Ovary (tissue), 10 donors: ENCODE measurements at regions of chr9 and their contacts with region 1.

Region 1: GRCh38 chr9:133726401-133727276 is 11.5 kb downstream of the SARDH start:
- DNase-seq: peak in 4 of 5 donors; percentile 50 to 67 (median 62)
- H3K4me3 ChIP-seq: no peak overlapping the region
- H3K27ac ChIP-seq: no peak overlapping the region
- H3K4me1 ChIP-seq: no peaks in the 10 kb centered on the region
- H3K27me3 ChIP-seq: no peaks in the 10 kb centered on the region
- CTCF ChIP-seq: peak in 2 of 3 donors; percentile 9 to 28
- EP300 ChIP-seq: no peak
- POLR2A ChIP-seq: no peak

Region 2: DNA sequence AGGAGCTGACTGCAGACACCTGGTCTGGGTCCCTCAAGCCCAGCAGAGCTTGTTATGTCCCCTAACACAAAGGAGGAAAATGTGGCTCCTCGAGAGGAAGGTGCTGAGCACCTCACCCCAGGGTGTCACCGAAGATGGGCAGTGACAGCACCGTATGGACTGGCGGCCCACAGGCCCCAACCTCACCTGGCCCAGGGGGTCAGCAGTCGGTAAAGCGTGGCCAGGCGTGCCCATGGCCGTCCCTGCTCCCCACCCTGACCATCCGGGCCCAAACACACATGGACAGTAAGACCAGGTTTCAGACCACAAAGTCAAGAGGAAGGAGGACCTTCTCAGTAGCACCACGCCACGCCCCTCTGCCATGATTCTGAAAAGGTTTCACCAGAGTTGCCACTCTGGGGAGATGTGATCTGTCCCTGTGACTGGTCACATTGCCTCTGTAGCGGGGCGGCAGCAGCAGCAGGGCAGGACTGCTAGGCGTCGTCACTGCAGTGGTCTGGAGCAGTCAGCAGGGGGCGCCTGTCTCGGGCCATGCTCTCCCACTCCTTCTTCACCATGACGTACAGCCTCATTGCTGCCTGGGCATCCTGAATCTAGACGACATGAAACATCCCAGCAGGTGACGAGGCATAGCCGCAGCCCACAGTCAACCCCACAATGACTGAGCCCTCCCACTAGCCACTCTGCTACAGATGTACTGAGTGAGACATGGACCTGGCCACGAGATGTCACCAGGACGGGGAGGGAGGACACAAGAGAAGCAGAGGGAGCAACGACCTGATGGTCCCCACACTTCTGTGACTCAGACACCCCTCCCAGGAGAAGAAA is 319.9 kb before region 1 on chr9:
- intact Hi-C with region 1: loop called in 1 of 4 experiments (anchors 10 kb)
- DNase-seq: peak; percentile 53 to 79 (median 72)
- H3K4me3 ChIP-seq: no peak overlapping the region
- H3K27ac ChIP-seq: no peak overlapping the region
- H3K4me1 ChIP-seq: no peaks in the 10 kb centered on the region
- H3K27me3 ChIP-seq: no peaks in the 10 kb centered on the region
- CTCF ChIP-seq: peak; percentile 61 to 78 (median 73)
- EP300 ChIP-seq: no peak
- POLR2A ChIP-seq: no peak

Region 3: DNA sequence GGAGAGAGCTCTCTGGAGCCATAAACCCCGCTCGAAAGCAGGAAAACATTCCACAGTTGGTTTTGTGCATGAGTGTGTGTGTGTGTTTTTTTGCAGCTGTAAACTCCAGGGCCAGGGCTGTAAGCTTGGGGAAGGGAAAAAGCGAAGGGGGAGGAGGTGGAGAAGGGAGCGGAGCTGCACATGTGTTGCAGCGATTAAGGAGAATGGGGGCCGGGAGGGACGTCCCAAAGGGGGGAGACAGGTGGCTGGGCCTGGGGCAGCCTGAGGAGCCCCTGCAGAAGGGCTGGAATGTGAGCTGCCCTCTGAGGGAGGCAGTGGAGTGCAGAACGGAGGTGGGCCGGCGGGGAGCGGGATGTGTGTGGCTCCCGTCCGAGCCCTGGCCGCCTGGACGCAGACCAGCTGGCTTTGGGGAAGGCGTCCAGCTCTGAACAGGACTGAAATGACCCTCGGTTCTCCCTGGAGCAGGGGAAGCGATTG is 199.2 kb before region 1 on chr9:
- intact Hi-C with region 1: loop called in 2 of 4 experiments (anchors 5 to 10 kb)
- DNase-seq: peak; percentile 73 to 89 (median 86)
- H3K4me3 ChIP-seq: no peak overlapping the region
- H3K27ac ChIP-seq: peak overlapping the region in 1 of 2 donors; percentile 49
- H3K4me1 ChIP-seq: peaks cover 17% of the 10 kb centered on the region
- H3K27me3 ChIP-seq: no peaks in the 10 kb centered on the region
- CTCF ChIP-seq: no peak
- EP300 ChIP-seq: no peak
- POLR2A ChIP-seq: no peak

Region 4: DNA sequence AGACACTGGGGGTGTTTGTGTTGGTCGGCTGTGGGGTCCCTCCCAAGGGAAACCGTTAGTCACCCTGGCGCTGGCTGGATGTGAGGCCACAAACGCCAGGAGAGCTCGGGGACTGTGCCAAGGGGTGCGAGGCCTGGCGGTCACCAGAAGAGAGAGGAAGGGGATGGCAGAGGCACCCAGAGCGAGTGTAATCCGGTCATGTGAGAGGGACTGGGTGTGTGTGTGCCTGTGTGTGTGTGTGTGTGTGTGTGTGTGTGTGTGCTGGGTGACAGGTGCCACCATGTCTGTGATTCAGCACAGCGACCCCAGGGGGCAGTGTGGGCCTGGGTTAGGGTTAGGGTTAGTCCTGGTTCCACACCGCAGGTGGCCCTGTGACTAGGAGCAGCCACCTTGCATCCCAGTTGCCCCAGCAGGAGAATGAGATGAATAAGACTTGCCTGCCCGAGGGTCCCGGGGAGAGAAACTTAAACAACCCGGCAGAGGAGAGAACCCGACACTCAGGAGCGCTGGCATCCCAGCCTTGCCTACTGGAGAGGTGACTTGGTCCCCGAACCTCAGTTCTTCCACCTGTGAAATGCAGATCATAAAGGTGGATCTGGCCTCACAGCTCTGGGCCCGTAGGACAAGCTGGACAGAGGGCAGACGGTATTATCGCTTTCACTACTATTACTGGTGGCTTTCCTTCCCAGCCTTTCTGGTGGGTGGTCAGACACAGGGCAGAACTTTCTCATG is 193.5 kb before region 1 on chr9:
- intact Hi-C with region 1: loop called in 2 of 4 experiments (anchors 5 to 10 kb)
- DNase-seq: peak in 1 of 5 donors; percentile 72
- H3K4me3 ChIP-seq: no peak overlapping the region
- H3K27ac ChIP-seq: no peak overlapping the region
- H3K4me1 ChIP-seq: peaks cover 18% of the 10 kb centered on the region
- H3K27me3 ChIP-seq: no peaks in the 10 kb centered on the region
- CTCF ChIP-seq: no peak
- EP300 ChIP-seq: no peak
- POLR2A ChIP-seq: no peak

Region 5: DNA sequence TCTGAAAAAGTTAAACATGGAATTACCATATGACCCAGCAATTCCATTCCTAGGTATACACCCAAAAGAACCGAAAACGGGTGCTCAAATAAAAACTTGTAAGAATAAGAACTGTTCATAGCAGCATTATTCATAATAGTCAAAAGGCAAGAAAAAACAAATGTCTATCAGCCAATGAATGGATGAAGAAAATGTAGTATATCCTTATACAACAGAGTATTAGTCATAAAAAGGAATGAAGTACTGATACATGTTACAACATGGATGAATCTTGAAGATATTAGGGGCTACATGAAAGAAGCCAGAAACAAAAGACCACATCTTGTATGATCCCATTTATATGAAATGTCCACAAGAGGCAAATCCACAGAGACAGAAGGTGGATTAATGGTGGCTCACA is 356.8 kb after region 1 on chr9:
- intact Hi-C with region 1: no loop called
- DNase-seq: no peak
- H3K4me3 ChIP-seq: no peak overlapping the region
- H3K27ac ChIP-seq: no peak overlapping the region
- H3K4me1 ChIP-seq: no peaks in the 10 kb centered on the region
- H3K27me3 ChIP-seq: no peaks in the 10 kb centered on the region
- CTCF ChIP-seq: no peak
- EP300 ChIP-seq: no peak
- POLR2A ChIP-seq: no peak